ENCODE measurements at regions of chr17 and their contacts with region 1.

Region 1: GRCh38 chr17:5500589-5501391 is 14.4 kb downstream of the MIS12 start:
- DNase-seq: peak; percentile 98
- ATAC-seq: peak; percentile 97
- H3K4me3 Mint-ChIP-seq: peak overlapping the region; percentile 96
- H3K27ac Mint-ChIP-seq: peak overlapping the region; percentile 81; the same call in 1 of the 2 replicates
- H3K4me1 Mint-ChIP-seq: peaks cover 10% of the 10 kb centered on the region
- H3K27me3 Mint-ChIP-seq: peaks cover 65% of the 10 kb centered on the region
- CTCF ChIP-seq: no peak

Region 2: DNA sequence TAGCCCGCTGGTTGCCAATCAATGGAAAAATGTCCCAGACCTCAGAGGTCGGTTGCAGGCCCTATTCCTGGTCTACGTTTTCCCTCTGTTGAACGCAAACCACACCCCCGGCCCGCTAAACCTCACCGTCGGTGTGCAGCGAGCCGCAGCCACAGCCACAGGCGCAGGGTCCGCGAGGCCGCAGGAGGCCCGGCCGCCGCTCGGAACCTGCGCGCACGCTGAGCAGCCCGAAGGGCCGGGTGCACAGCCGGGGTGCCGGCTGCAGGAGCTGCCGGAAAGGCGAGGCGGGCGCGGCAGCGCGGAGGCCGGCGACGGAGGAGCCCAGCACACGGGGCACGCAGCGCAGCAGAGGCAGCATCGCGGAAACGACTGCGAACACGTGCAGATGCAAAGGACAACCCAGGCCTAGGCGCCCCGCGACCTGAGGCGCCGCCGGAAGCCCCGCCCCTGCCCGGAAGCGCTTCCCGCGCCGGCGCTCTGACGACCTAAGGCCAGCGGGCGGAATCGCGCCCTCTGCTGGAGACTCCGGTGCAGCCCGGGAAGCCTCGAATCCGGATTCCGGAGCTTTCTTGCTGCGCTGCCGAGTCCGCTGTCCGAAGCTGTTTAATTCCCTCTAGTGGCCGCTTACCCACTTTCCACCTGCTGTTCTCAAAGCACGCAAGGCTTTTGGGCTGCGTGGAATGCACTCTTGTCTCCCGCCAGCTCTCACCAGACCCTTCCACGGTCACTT is 61.9 kb before region 1 on chr17 and contains the start of gene C1QBP:
- CTCF ChIA-PET with region 1: interaction called, 15 read pairs
- POLR2A ChIA-PET with region 1: no interaction called
- DNase-seq: peak; percentile 96
- ATAC-seq: peak; percentile 91
- H3K4me3 Mint-ChIP-seq: peak within 1 kb of the TSS; percentile 88
- H3K27ac Mint-ChIP-seq: peak within 1 kb of the TSS; percentile 89
- H3K4me1 Mint-ChIP-seq: peaks cover 20% of the 10 kb centered on the region
- H3K27me3 Mint-ChIP-seq: no peaks in the 10 kb centered on the region
- CTCF ChIP-seq: peak; percentile 90
- total RNA-seq, gene C1QBP: 377 to 429 TPM (median 382 TPM) in 3 replicates

Region 3: DNA sequence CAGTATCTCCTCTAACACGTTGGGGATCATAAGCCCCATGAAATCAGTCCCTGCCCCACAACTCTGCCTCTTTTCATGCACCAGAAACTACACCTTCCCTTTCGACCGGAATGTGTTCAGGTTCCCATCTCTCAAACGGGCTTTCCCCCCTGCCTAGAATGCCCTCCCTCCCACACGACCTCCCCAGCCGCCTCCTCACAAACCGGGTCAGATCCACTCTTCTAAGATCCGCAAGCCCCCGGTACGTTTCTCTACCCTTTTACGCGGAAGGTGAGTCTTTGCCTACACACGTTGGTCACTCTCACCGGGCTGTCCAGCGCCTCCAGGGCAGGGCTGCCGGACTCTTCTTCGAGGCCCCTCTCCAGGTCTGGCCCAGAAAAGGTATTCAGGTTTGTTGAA is 32.7 kb before region 1 on chr17:
- CTCF ChIA-PET with region 1: interaction called, 4 read pairs
- POLR2A ChIA-PET with region 1: interaction called, 12 read pairs
- DNase-seq: no peak
- ATAC-seq: no peak
- H3K4me3 Mint-ChIP-seq: peak overlapping the region; percentile 89
- H3K27ac Mint-ChIP-seq: peak overlapping the region; percentile 43
- H3K4me1 Mint-ChIP-seq: peaks cover 23% of the 10 kb centered on the region
- H3K27me3 Mint-ChIP-seq: no peaks in the 10 kb centered on the region
- CTCF ChIP-seq: no peak

Region 4: DNA sequence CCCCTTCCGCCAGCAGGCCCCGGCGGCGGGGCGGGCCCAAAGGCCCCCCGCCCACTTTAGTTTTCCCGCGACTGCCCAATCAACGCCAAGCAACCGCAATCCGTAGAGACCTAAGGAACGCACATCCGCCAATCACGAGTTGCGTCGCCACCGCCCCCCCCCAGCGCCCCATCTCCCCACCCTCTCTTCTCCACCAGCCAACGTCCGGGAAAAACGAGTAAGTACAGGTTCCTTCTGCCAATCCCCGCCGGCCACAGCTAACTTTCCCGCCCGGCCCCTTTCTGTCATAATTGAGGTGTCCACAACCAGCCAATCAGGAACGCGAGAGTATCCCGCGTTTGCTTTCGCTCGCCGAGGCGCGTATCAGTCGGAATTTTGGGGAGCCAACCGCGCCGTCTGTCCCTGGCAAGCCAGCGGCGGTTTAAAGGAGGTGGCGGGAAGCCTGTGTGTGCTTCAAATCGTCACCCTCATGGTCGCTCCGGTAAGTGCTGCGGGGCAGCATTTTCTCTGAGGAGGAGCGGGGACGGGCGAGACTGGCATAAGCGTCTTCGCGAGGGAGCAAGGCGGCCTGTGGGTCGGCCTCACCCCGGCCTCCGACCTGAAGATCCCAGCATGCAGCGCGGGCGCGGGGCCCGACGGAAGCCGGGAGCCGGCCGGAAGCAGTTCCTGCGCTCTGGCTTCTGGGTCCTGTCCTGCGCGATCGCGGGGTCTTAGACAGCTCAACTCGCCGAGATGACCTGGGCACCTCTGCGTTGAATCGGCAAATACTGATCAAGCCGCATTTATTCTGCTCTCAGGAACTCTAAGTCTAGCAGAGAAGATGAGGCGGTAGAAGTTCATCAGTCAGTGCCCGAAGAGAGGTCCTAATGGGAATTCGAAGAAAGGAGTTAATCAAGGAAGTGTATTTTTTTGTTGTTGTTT is 14.3 kb before region 1 on chr17 and contains the start of gene MIS12:
- CTCF ChIA-PET with region 1: interaction called, 5 read pairs
- POLR2A ChIA-PET with region 1: interaction called, 24 read pairs
- DNase-seq: peak; percentile 97
- ATAC-seq: peak; percentile 95
- H3K4me3 Mint-ChIP-seq: peak within 1 kb of the TSS; percentile 100
- H3K27ac Mint-ChIP-seq: peak within 1 kb of the TSS; percentile 100
- H3K4me1 Mint-ChIP-seq: peaks cover 26% of the 10 kb centered on the region
- H3K27me3 Mint-ChIP-seq: no peaks in the 10 kb centered on the region
- CTCF ChIP-seq: no peak
- total RNA-seq, gene MIS12: 22.6 to 25.5 TPM (median 24.8 TPM) in 3 replicates

Region 5: DNA sequence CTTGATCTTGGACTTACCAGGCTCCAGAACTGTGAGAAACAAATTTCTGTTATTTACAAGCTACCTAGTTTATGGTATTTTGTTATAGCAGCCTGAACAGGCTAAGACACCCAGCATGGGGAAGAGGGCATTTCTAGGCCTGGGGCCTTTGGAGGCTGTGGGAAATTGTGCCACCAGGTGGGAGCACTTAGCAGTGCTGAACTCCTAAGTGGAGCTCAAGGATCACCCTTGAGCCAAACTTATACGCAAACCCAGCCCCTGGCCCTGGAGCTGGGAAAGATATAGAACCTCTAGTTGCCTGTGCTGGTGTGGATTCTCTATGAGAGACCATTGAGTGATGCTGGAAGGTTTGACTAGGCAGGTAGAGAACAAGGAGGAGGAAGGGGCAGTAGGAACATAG is 21.7 kb after region 1 on chr17:
- CTCF ChIA-PET with region 1: interaction called, 11 read pairs
- POLR2A ChIA-PET with region 1: interaction called, 3 read pairs
- DNase-seq: no peak
- ATAC-seq: peak; percentile 65
- H3K4me3 Mint-ChIP-seq: no peak overlapping the region
- H3K27ac Mint-ChIP-seq: no peak overlapping the region
- H3K4me1 Mint-ChIP-seq: no peaks in the 10 kb centered on the region
- H3K27me3 Mint-ChIP-seq: peaks cover 3% of the 10 kb centered on the region
- CTCF ChIP-seq: no peak

Region 6: DNA sequence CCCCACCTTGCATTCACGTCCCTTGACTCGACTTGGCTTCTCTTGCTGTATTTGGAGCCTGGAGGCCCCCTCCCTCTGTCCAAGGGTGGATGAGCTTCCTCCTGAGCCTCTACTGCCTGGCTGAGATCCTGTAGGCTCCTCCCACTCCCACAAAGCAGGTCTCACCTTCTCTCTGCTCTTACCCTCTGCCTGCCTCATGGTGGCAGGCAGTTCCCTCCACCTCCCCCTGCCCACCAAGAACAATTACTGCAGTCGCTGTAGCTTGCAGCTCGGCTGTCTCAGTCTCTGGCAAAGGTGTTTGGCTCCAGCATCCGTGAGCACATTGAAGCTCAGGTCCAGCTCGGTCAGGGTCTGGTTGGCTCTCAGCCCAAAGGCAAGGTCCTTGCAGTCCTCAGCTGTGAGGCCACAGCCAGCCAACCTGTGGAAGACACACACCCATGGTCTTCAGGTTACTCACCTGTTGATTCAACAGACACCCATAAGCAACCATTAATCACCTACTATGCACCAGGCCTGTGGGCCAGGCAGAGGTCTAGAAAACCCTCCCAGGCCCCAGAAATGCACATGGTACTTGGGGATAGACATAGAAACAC is 40.9 kb after region 1 on chr17:
- CTCF ChIA-PET with region 1: interaction called, 11 read pairs
- POLR2A ChIA-PET with region 1: no interaction called
- DNase-seq: peak; percentile 31
- ATAC-seq: peak; percentile 99
- H3K4me3 Mint-ChIP-seq: no peak overlapping the region
- H3K27ac Mint-ChIP-seq: no peak overlapping the region
- H3K4me1 Mint-ChIP-seq: peaks cover 9% of the 10 kb centered on the region
- H3K27me3 Mint-ChIP-seq: peaks cover 2% of the 10 kb centered on the region; the same call in 1 of the 2 replicates
- CTCF ChIP-seq: no peak

Region 7: DNA sequence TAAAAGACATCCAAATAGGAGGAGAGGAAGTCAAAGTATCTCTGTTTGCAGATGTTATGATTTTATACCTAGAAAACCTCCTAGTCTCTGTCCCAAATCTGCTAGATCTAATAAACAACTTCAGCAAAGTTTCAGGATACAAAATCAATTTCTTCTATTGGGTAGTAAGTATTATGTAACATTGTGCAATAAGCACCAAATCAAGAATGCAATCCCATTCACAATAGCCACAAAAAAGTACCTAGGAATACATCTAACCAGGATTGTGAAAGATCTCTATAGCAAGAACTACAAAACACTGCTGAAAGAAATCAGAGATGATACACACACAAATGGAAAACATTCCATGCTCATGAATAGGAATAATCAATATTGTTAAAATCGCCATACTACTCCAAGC is 70.5 kb after region 1 on chr17:
- CTCF ChIA-PET with region 1: no interaction called
- POLR2A ChIA-PET with region 1: no interaction called
- DNase-seq: no peak
- ATAC-seq: no peak
- H3K4me3 Mint-ChIP-seq: no peak overlapping the region
- H3K27ac Mint-ChIP-seq: no peak overlapping the region
- H3K4me1 Mint-ChIP-seq: no peaks in the 10 kb centered on the region
- H3K27me3 Mint-ChIP-seq: peaks cover 39% of the 10 kb centered on the region
- CTCF ChIP-seq: no peak